ENCODE measurements at regions of chr6 and their contacts with region 1.

Region 1: DNA sequence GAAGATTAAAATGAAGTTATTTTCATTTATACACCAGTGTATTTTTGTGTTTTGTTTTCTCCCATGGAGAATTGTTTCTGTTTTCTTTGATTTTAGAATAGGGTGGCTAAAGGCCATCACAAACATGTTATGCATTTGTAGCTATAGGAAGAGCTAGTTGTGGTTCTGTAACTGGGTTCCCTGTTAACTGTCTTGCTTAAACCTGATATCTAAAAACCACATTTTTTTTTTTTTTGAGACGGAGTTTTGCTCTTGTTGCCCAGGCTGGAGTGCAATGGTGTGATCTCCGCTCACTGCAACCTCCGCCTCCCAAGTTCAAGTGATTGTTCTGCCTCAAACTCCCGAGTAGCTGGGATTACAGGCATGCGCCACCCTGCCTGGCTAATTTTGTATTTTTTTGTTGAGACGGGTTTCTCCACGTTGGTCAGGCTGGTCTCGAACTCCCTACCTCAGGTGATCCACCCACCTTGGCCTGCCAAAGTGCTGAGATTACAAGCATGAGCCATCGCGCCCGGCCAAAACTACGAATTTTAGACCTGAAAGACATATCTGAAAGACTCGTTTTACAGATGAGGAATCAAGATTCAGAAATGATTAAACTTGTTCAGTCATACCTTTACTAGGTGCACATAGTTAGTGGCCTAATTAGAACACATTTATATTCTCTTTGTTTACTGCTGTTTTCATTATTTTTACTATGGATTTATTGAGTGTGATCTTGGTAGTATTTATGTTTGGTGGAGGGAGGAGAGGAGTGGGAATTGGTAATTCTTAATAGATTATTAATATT is 18.0 kb downstream of the SCAF8 start:
- DNase-seq: peak; percentile 60
- ATAC-seq: peak; percentile 70
- H3K4me3 Mint-ChIP-seq: no peak overlapping the region
- H3K27ac Mint-ChIP-seq: no peak overlapping the region
- H3K4me1 Mint-ChIP-seq: peaks cover 63% of the 10 kb centered on the region
- H3K27me3 Mint-ChIP-seq: no peaks in the 10 kb centered on the region

Region 2: GRCh38 chr6:154773610-154774089 is 22.4 kb after region 1 on chr6:
- CTCF ChIA-PET with region 1: interaction called, 5 read pairs
- POLR2A ChIA-PET with region 1: no interaction called
- intact Hi-C with region 1: loop called in 1 of 2 experiments (anchors 2 kb)
- DNase-seq: no peak
- ATAC-seq: peak; percentile 83
- H3K4me3 Mint-ChIP-seq: no peak overlapping the region
- H3K27ac Mint-ChIP-seq: peak overlapping the region; percentile 34
- H3K4me1 Mint-ChIP-seq: peaks cover 48% of the 10 kb centered on the region
- H3K27me3 Mint-ChIP-seq: no peaks in the 10 kb centered on the region

Measured in activated CD4-positive, alpha-beta T cell treated with anti-CD3 and anti-CD28 coated beads for 36 hours (primary cell).